PC-9 (cell line): ENCODE measurements at regions of chr2 and their contacts with region 1.

Region 1: GRCh38 chr2:72263043-72263775 is 115.5 kb upstream of the CYP26B1 start:
- DNase-seq: no peak
- H3K4me3 ChIP-seq: no peak overlapping the region
- H3K27ac ChIP-seq: no peak overlapping the region
- H3K4me1 ChIP-seq: no peaks in the 10 kb centered on the region
- H3K27me3 ChIP-seq: no peaks in the 10 kb centered on the region
- CTCF ChIP-seq: no peak

Region 2: GRCh38 chr2:72330668-72331067 is 67.5 kb after region 1 on chr2:
- CTCF ChIA-PET with region 1: no interaction called
- POLR2A ChIA-PET with region 1: interaction called, 18 read pairs
- intact Hi-C with region 1: no loop called
- DNase-seq: no peak
- H3K4me3 ChIP-seq: no peak overlapping the region
- H3K27ac ChIP-seq: no peak overlapping the region
- H3K4me1 ChIP-seq: no peaks in the 10 kb centered on the region
- H3K27me3 ChIP-seq: no peaks in the 10 kb centered on the region
- CTCF ChIP-seq: no peak